Posterior vena cava (tissue), 2 donors: ENCODE measurements at regions of chr1 and their contacts with region 1.

Region 1: DNA sequence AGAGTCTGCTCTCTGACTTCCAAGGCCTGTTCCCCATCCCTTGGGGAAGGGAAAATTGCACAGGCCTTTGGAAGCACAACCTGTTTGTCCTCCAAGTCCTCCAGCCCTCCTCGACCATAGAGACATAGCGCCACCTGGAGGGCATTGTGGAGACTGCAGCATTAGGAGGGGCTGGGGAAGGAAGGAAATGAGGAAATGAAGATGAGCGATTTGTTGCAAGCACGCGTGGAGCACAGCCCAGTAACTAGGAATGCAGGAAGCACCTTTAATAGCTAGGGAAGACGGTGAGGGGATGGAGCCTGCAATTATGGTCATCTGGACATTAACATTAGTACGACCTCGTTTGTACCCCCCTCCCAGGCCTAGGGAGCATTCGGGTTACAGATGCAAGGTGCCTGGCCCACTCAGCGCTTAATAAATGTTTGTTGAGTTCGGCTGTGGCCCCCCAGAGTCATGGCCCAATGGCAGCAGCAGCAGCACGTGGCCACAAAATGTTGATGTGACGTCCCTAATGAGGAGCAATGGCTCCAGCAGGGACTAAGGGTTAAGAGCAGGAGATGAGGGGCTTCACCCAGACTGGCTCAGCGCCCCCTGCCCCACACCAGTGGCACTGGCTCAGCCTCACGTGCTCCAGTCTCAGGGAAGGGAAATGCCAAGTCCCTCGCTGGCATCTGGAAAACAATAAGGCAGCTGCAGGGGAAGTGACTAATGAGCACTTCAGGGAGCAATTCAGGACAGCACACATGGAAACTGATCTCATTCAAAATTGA is 8.0 kb upstream of the CAMK2N1 start:
- DNase-seq: peak; percentile 95

Region 2: DNA sequence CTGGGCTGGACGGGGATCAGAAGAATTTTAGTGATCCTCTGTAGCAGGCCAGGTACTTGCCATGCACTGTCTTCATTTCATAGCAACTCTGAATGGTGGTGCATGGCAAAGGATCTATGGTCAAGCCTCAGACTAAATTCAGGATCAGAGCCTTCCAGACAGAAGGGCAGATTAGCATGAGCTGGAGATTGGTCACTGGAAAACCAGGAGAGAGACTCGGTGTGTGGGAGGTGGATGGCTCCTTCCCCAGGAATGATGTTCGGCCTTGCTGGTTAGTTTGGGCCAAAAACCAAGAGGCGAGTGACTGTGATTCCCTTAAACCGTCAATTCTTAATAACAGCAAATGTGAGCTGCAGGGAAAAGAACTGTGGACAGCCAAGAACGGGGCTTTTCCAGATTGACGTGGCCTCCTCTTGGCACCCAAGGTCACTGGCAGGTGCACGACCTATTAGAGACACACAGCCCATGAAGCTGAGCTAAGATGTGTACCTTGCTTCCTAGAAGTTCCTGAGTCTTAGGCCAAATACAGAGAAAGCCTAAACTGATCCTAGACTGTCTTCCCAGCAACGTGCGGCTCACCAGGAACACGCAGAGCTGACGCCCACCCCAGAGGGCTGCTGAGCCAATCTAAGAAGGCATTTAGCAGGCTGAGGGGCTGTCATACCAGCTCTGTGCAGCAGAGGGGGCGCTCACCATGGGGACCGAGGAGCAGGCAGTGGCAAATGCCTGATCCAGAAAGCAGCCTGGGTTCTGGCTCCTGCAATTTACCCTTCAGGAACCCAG is 1610.2 kb before region 1 on chr1:
- intact Hi-C with region 1: loop called in 1 of 2 experiments (anchors 10 kb)
- DNase-seq: peak; percentile 92

Region 3: DNA sequence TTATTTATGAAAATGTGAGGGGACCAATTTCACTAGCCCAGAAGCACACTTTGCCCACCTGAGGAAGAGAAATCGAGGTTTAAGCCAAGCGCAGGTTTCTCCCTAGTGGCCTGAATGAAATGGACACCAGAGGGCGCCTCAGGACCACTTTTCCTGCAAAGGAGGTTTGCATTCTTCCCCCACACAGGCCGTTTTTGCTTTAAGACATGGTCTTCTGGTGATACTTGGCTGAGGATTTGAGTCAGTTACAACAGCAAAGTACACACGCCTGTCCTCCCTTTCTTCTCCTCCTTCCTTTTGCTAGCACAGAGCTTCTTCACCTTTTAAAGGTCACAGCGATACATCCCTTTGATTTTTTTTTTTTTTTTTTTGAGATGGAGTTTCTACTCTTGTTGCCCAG is 576.0 kb before region 1 on chr1:
- intact Hi-C with region 1: loop called in 1 of 2 experiments (anchors 5 kb)
- DNase-seq: peak; percentile 93

Region 4: GRCh38 chr1:20212685-20213331 is 281.2 kb before region 1 on chr1:
- intact Hi-C with region 1: loop called (anchors 5 kb)
- DNase-seq: peak; percentile 86

Region 5: GRCh38 chr1:20376880-20377494 is 117.0 kb before region 1 on chr1:
- intact Hi-C with region 1: loop called in 1 of 2 experiments (anchors 10 kb)
- DNase-seq: peak; percentile 86